B cell (primary cell): ENCODE measurements at regions of chr6 and their contacts with region 1.

Region 1: DNA sequence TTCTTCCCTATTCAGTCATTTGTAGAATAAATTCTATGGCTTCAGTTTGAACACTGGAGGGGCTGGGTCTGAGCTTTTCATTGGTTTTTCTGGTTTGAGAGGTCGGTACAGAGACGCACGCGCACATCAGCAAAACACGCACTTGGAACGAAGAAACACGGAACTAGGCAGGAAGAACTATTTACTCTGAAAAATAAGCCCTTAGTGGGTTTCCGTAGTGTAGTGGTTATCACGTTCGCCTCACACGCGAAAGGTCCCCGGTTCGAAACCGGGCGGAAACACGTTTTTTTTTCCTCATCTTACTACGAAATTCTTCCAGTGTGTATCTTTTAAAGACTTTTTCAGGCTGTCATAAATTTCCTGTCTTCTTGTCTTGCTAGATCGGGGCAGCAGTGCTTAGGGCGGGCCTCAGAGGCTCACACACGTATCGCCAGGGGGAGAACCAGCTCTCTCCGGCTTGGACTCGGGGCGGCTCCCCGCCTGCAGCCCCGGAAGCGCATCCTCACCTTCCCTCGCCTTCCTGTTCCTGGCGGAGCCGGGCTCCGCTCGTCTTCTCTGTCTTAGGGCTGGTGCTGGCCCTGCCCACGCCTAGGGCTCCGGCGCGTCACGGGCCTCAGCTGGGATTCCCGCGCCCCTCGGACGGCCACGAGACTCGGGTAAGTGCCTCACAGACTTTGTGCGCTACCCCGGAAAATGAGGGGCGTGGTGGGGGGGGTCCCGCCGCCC is at the start of gene HMGN4:
- DNase-seq: peak; percentile 97
- ATAC-seq: peak; percentile 68
- H3K4me3 ChIP-seq: peak within 1 kb of the TSS; percentile 89 to 98 (median 92)
- H3K4me3 Mint-ChIP-seq: peak within 1 kb of the TSS; percentile 96
- H3K27ac ChIP-seq: peak within 1 kb of the TSS; percentile 84 to 94
- H3K27ac Mint-ChIP-seq: peak within 1 kb of the TSS; percentile 99
- H3K4me1 ChIP-seq: peaks cover 29 to 35% of the 10 kb centered on the region in 2 donors
- H3K4me1 Mint-ChIP-seq: peaks cover 56% of the 10 kb centered on the region
- H3K27me3 ChIP-seq: no peaks in the 10 kb centered on the region
- H3K27me3 Mint-ChIP-seq: peaks cover 3% of the 10 kb centered on the region
- CTCF ChIP-seq: peak; percentile 8
- total RNA-seq, gene HMGN4: 81.1 and 82.4 TPM in 2 replicates

Region 2: DNA sequence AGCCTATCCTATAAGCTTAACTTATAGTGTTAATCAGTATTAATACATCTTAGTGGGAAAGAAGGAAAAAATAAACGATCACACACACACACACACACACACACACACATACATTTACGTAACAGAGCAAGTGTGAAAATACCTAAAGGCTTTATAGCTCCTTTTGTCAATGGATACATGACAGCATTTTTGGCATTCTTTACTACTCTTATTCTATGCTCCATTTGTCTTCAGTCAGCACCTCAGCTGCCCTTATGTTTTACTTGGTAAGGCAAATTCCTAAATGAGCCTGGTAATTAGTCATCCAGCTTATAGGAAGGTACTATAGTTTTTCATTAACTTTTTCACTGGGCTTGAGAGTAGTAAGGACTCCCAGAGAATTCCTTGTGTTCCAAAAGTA is 638.9 kb before region 1 on chr6:
- CTCF ChIA-PET with region 1: no interaction called
- POLR2A ChIA-PET with region 1: no interaction called
- intact Hi-C with region 1: no loop called
- DNase-seq: no peak
- ATAC-seq: no peak
- H3K4me3 ChIP-seq: no peak overlapping the region
- H3K4me3 Mint-ChIP-seq: no peak overlapping the region
- H3K27ac ChIP-seq: no peak overlapping the region
- H3K27ac Mint-ChIP-seq: no peak overlapping the region
- H3K4me1 ChIP-seq: peaks cover 3 to 6% of the 10 kb centered on the region in 2 donors
- H3K4me1 Mint-ChIP-seq: peaks cover 4% of the 10 kb centered on the region
- H3K27me3 ChIP-seq: no peaks in the 10 kb centered on the region
- H3K27me3 Mint-ChIP-seq: peaks cover 2% of the 10 kb centered on the region
- CTCF ChIP-seq: no peak

Region 3: GRCh38 chr6:26342106-26343004 is 195.7 kb before region 1 on chr6:
- CTCF ChIA-PET with region 1: interaction called, 3 read pairs
- POLR2A ChIA-PET with region 1: interaction called, 3 read pairs
- intact Hi-C with region 1: loop called (anchors 5 kb)
- DNase-seq: no peak
- ATAC-seq: peak; percentile 9
- H3K4me3 ChIP-seq: peak overlapping the region in 1 of 5 experiments; percentile 19
- H3K4me3 Mint-ChIP-seq: peak overlapping the region; percentile 52
- H3K27ac ChIP-seq: no peak overlapping the region
- H3K27ac Mint-ChIP-seq: no peak overlapping the region
- H3K4me1 ChIP-seq: peaks cover 9 to 13% of the 10 kb centered on the region in 2 donors
- H3K4me1 Mint-ChIP-seq: peaks cover 8% of the 10 kb centered on the region
- H3K27me3 ChIP-seq: peaks cover 0 to 33% (median 25%) of the 10 kb centered on the region in 4 experiments
- H3K27me3 Mint-ChIP-seq: peaks cover 47% of the 10 kb centered on the region
- CTCF ChIP-seq: no peak

Region 4: GRCh38 chr6:26401987-26402658 is 135.9 kb before region 1 on chr6 and contains the start of gene BTN3A1:
- CTCF ChIA-PET with region 1: interaction called, 3 read pairs
- POLR2A ChIA-PET with region 1: no interaction called
- intact Hi-C with region 1: loop called (anchors 5 kb)
- DNase-seq: peak; percentile 86
- ATAC-seq: peak; percentile 87
- H3K4me3 ChIP-seq: peak within 1 kb of the TSS; percentile 51 to 98 (median 94)
- H3K4me3 Mint-ChIP-seq: peak within 1 kb of the TSS; percentile 98
- H3K27ac ChIP-seq: peak within 1 kb of the TSS; percentile 64 to 84
- H3K27ac Mint-ChIP-seq: peak within 1 kb of the TSS; percentile 97
- H3K4me1 ChIP-seq: peaks cover 43 to 53% of the 10 kb centered on the region in 2 donors
- H3K4me1 Mint-ChIP-seq: peaks cover 63% of the 10 kb centered on the region
- H3K27me3 ChIP-seq: no peaks in the 10 kb centered on the region
- H3K27me3 Mint-ChIP-seq: no peaks in the 10 kb centered on the region
- CTCF ChIP-seq: no peak
- total RNA-seq, gene BTN3A1: 173 and 175 TPM in 2 replicates

Region 5: GRCh38 chr6:26457806-26458688 is 80.0 kb before region 1 on chr6 and contains the start of gene BTN2A1:
- CTCF ChIA-PET with region 1: no interaction called
- POLR2A ChIA-PET with region 1: no interaction called
- intact Hi-C with region 1: loop called (anchors 5 kb)
- DNase-seq: peak; percentile 89
- ATAC-seq: peak; percentile 96
- H3K4me3 ChIP-seq: peak within 1 kb of the TSS; percentile 75 to 96 (median 92)
- H3K4me3 Mint-ChIP-seq: peak within 1 kb of the TSS; percentile 100
- H3K27ac ChIP-seq: peak within 1 kb of the TSS; percentile 77 to 89
- H3K27ac Mint-ChIP-seq: peak within 1 kb of the TSS; percentile 98
- H3K4me1 ChIP-seq: peaks cover 30 to 47% of the 10 kb centered on the region in 2 donors
- H3K4me1 Mint-ChIP-seq: peaks cover 72% of the 10 kb centered on the region
- H3K27me3 ChIP-seq: no peaks in the 10 kb centered on the region
- H3K27me3 Mint-ChIP-seq: no peaks in the 10 kb centered on the region
- CTCF ChIP-seq: no peak
- total RNA-seq, gene BTN2A1: 63.3 and 69.6 TPM in 2 replicates

Region 6: GRCh38 chr6:26520853-26521599 is 17.0 kb before region 1 on chr6:
- CTCF ChIA-PET with region 1: interaction called, 27 read pairs
- POLR2A ChIA-PET with region 1: interaction called, 51 read pairs
- intact Hi-C with region 1: loop called (anchors 1 kb)
- DNase-seq: peak; percentile 94
- ATAC-seq: peak; percentile 64
- H3K4me3 ChIP-seq: peak overlapping the region; percentile 60 to 95 (median 74)
- H3K4me3 Mint-ChIP-seq: peak overlapping the region; percentile 84
- H3K27ac ChIP-seq: peak overlapping the region; percentile 85 to 94
- H3K27ac Mint-ChIP-seq: peak overlapping the region; percentile 91
- H3K4me1 ChIP-seq: peaks cover 17 to 20% of the 10 kb centered on the region in 2 donors
- H3K4me1 Mint-ChIP-seq: peaks cover 33% of the 10 kb centered on the region
- H3K27me3 ChIP-seq: no peaks in the 10 kb centered on the region
- H3K27me3 Mint-ChIP-seq: no peaks in the 10 kb centered on the region
- CTCF ChIP-seq: no peak

Region 7: DNA sequence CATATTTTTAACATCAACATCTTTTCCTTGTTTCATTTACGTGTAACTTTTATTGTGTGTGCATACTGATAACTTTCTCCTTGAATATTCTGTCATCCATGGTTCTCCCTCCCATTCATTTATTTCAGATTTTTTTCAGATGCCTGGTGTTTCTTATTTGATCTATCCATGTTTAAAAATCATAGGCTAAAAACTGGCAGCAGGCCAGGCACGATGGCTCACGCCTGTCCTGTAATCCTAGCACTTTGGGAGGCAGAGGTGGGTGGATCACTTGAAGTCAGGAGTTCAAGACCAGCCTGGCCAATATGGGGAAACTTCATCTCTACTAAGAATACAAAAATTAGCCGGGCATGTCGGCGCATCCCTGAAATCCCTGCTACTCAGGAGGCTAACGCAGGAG is 89.8 kb after region 1 on chr6:
- CTCF ChIA-PET with region 1: no interaction called
- POLR2A ChIA-PET with region 1: no interaction called
- intact Hi-C with region 1: no loop called
- DNase-seq: no peak
- ATAC-seq: no peak
- H3K4me3 ChIP-seq: no peak overlapping the region
- H3K4me3 Mint-ChIP-seq: no peak overlapping the region
- H3K27ac ChIP-seq: no peak overlapping the region
- H3K27ac Mint-ChIP-seq: no peak overlapping the region
- H3K4me1 ChIP-seq: no peaks in the 10 kb centered on the region
- H3K4me1 Mint-ChIP-seq: no peaks in the 10 kb centered on the region
- H3K27me3 ChIP-seq: no peaks in the 10 kb centered on the region
- H3K27me3 Mint-ChIP-seq: no peaks in the 10 kb centered on the region
- CTCF ChIP-seq: no peak